ENCODE measurements at regions of chr12 and their contacts with region 1.

Region 1: GRCh38 chr12:31682136-31682962 is 22.9 kb downstream of the ETFBKMT start:
- DNase-seq: peak; percentile 91
- H3K4me3 Mint-ChIP-seq: no peak overlapping the region
- H3K27ac Mint-ChIP-seq: peak overlapping the region; percentile 54
- H3K4me1 Mint-ChIP-seq: peaks cover 10% of the 10 kb centered on the region
- H3K27me3 Mint-ChIP-seq: no peaks in the 10 kb centered on the region

Region 2: DNA sequence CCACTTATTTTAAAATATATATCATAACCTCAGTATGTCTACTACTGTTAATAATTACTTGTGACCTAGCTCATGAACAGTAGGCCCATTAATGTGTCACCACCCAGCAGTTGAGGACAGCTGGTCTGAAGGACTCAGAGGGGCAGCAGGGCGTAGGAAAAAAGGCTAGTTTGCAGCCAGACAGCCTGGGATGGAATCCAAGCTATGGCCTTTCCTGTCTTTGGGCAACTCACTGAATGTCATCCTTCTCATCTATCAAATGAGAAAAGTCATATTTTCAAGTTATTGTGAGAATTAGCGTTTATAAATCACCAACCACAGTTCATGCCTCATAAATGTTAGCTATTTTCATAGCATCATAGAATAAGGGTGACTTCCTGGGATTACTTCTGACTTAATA is 103.7 kb before region 1 on chr12:
- intact Hi-C with region 1: no loop called
- DNase-seq: no peak
- H3K4me3 Mint-ChIP-seq: no peak overlapping the region
- H3K27ac Mint-ChIP-seq: no peak overlapping the region
- H3K4me1 Mint-ChIP-seq: no peaks in the 10 kb centered on the region
- H3K27me3 Mint-ChIP-seq: peaks cover 3% of the 10 kb centered on the region

Region 3: GRCh38 chr12:31659087-31659933 is 23.0 kb before region 1 on chr12 and contains the start of gene ETFBKMT:
- intact Hi-C with region 1: loop called (anchors 1 kb)
- DNase-seq: peak; percentile 98
- H3K4me3 Mint-ChIP-seq: peak within 1 kb of the TSS; percentile 93
- H3K27ac Mint-ChIP-seq: peak within 1 kb of the TSS; percentile 99
- H3K4me1 Mint-ChIP-seq: peaks cover 15% of the 10 kb centered on the region
- H3K27me3 Mint-ChIP-seq: no peaks in the 10 kb centered on the region
- total RNA-seq, gene ETFBKMT: 0.52 and 0.84 TPM in 2 replicates

Region 4: DNA sequence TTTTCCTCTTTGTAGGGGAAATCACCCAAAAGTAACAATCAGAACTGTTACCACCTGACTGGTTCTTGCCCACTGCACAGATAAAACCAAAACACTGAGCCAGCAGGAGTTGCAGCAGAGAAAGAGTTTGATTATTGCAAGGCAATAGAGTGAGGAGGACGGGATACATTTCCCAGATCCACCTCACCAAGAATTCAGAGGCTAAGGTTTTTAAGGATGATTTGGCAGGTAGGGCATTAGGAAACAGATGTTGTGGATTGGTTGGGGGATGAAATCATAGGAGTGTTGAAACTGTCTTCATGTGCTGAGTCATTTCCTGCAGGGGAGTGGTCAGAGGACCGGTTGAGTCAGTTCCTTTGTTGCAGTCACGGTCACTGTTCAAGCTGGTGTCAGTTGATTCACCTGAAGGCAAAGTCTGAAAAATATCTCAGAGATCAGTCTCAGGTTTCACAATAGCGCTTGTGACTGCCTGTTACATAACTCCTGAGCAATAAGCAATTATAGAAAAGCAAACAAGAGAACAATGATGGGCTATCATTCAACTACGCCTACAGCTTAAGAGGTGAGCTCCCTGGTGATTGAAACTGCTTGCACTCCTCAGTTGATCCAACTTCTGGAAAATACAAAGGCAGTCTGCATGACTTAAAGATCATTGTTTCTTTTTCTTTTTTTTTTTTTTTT is 66.8 kb after region 1 on chr12:
- intact Hi-C with region 1: no loop called
- DNase-seq: peak; percentile 89
- H3K4me3 Mint-ChIP-seq: peak overlapping the region; percentile 1
- H3K27ac Mint-ChIP-seq: peak overlapping the region; percentile 38
- H3K4me1 Mint-ChIP-seq: peaks cover 43% of the 10 kb centered on the region
- H3K27me3 Mint-ChIP-seq: no peaks in the 10 kb centered on the region

Region 5: DNA sequence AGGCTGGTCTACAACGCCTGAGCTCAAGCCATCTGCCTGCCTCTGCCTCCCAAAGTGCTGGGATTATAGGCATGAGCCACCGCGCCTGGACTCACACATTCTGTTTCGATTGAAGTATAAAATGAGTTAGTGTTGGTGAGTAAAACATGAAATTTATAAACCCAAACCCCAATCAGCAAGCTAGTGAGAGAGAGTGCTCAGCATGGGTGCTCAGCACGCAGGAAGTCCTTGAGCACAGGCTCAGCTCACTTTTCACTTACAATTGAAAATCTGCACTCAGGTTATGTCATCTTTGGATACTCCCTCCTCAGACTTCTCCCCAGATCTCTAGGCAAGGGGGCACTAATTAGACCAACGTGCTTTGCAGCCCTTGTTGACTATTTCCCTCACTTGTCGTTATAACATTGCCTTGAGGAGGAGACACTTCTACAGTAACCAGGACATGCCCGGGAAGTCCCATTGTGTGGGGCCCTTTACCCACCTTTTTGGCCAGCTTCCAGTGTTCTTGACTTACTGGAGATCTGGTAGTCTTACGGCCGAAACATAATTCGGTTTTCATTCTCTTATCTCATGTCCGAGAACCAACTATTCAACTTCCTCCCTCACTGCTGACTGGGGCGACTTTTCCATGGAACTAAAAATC is 115.0 kb after region 1 on chr12:
- intact Hi-C with region 1: no loop called
- DNase-seq: no peak
- H3K4me3 Mint-ChIP-seq: no peak overlapping the region
- H3K27ac Mint-ChIP-seq: no peak overlapping the region
- H3K4me1 Mint-ChIP-seq: peaks cover 13% of the 10 kb centered on the region
- H3K27me3 Mint-ChIP-seq: no peaks in the 10 kb centered on the region

Region 6: GRCh38 chr12:32069071-32069470 is 386.7 kb after region 1 on chr12:
- intact Hi-C with region 1: loop called (anchors 10 kb)
- DNase-seq: no peak
- H3K4me3 Mint-ChIP-seq: no peak overlapping the region
- H3K27ac Mint-ChIP-seq: no peak overlapping the region
- H3K4me1 Mint-ChIP-seq: no peaks in the 10 kb centered on the region
- H3K27me3 Mint-ChIP-seq: peaks cover 3% of the 10 kb centered on the region